PC-9 (cell line): ENCODE measurements at regions of chr4 and their contacts with region 1.

Region 1: GRCh38 chr4:123996718-123997510 is 600.3 kb downstream of the SPRY1 start:
- DNase-seq: peak; percentile 39 to 45
- H3K4me3 ChIP-seq: no peak overlapping the region
- H3K27ac ChIP-seq: no peak overlapping the region
- H3K4me1 ChIP-seq: peaks cover 25% of the 10 kb centered on the region; the same call in 1 of the 2 replicates
- H3K27me3 ChIP-seq: no peaks in the 10 kb centered on the region
- CTCF ChIP-seq: 0 out of 2 replicates have a peak, but pooled peaks have one; percentile 21

Region 2: GRCh38 chr4:125187226-125188176 is 1190.6 kb after region 1 on chr4:
- CTCF ChIA-PET with region 1: no interaction called
- POLR2A ChIA-PET with region 1: interaction called, 10 read pairs
- intact Hi-C with region 1: no loop called
- DNase-seq: peak in 1 of 2 experiments; percentile 5
- H3K4me3 ChIP-seq: no peak overlapping the region
- H3K27ac ChIP-seq: no peak overlapping the region
- H3K4me1 ChIP-seq: no peaks in the 10 kb centered on the region
- H3K27me3 ChIP-seq: no peaks in the 10 kb centered on the region
- CTCF ChIP-seq: no peak